ENCODE measurements at regions of chr17 and their contacts with region 1.

Region 1: DNA sequence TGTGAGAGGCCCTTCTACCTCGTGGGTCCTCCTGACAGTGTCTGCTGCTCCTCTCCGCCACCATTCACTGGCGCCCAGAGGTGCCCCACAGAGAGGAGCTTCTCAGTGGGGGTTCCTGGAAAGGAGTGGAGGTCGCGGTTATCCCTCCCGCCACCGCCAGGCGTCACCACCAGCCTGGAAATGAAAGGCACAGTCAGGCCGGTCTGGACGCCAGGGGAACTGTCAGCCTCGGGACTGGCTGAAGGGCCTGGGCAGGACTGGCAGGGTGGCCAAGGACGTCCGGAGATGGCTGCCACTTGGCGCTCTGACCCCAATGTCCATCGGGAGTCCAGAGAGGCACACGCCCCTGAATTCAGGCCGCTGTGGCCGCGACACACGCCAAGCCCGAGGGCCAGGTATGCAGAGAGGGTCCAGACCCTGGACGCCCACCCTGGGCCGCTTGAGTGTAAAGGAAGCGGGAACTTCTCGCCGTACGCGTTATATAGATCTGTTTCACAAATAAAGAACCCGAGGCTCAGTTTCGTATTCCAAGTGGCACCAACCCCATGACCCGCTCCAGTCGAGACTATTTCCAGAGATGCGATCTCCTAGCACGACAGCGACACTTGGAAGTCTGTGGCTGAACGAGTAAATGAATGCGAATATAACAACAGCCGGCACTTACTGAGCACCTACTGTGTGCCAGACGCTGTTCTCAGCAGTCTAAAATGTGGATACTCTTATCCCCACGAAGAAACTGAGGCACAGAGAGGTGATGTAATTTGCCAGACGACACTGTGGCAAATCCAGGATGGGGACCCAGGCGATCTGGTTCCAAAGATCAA is 7.6 kb upstream of the NXPH3 start:
- DNase-seq: peak; percentile 95
- H3K4me3 ChIP-seq: peak overlapping the region; percentile 39 to 52
- H3K27ac ChIP-seq: peak overlapping the region; percentile 70 to 84
- H3K4me1 ChIP-seq: peaks cover 36% of the 10 kb centered on the region
- H3K27me3 ChIP-seq: no peaks in the 10 kb centered on the region
- CTCF ChIP-seq: peak; percentile 97 to 99 (median 97)
- POLR2A ChIP-seq: no peak

Region 2: GRCh38 chr17:49456183-49456965 is 111.7 kb before region 1 on chr17:
- intact Hi-C with region 1: no loop called
- DNase-seq: peak; percentile 52
- H3K4me3 ChIP-seq: no peak overlapping the region
- H3K27ac ChIP-seq: no peak overlapping the region
- H3K4me1 ChIP-seq: no peaks in the 10 kb centered on the region
- H3K27me3 ChIP-seq: no peaks in the 10 kb centered on the region
- CTCF ChIP-seq: no peak
- POLR2A ChIP-seq: no peak

Region 3: DNA sequence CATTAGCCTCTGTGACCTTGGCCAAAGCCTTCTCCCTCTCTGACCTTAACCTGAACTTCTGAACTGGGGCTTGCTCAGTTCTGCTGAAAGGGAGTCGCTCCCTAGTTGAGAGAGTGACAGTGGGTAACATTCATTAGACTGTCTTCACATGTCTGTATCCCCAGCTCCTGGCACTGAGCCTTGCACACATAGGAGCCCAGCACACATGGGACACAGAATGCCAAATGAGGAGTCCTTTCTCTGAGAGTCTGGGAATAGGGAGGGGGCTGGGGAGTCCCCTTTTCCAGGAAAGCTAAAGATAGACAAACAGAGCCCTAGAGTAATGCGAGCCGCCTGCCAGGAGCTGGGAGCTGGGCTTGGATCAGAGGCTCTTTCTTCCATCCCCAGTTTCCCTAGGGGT is 277.2 kb after region 1 on chr17:
- intact Hi-C with region 1: loop called (anchors 5 kb)
- DNase-seq: peak; percentile 50
- H3K4me3 ChIP-seq: no peak overlapping the region
- H3K27ac ChIP-seq: peak overlapping the region in 1 of 2 donors; percentile 7
- H3K4me1 ChIP-seq: peaks cover 13% of the 10 kb centered on the region
- H3K27me3 ChIP-seq: no peaks in the 10 kb centered on the region
- CTCF ChIP-seq: no peak
- POLR2A ChIP-seq: no peak

Measured in testis (tissue), 5 donors.